ENCODE measurements at regions of chr16 and their contacts with region 1.

Region 1: DNA sequence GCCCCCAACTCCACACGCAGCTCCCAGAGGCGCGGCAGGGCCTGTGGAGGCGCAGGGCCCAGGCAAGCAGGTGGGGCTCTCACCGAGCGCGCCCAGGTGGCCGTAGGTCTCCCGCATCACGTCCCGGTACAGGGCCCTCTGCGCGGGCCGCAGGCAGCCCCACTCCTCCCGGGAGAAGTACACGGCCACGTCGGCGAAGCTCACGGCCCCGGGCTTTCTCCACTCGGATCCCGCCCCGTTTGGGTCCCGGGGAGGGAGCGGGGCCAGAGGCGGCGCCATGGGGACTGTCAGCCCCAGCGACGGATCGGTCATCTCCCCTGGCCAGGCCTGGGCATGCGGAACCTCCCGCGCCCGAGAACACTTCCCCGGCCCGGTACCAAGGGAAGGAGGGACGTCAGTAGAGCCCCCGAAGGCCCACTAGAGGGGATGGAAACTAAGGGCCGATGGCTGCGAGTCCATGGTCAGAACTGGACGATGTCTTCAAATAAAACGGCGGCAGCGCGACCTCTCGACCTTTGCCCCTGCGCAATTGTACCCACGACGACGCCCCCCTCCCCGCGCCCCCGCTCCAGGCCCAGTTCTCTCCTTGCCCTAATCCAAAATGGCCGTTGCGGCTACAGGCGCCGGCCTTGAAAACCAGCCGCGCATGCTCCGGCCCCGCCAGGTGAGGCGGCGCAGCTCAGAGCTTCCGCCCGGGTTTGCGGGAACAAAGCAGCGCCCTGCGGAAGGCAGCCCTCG is at the start of gene ZNF747:
- DNase-seq: peak; percentile 91
- ATAC-seq: peak; percentile 83
- H3K4me3 Mint-ChIP-seq: peak within 1 kb of the TSS; percentile 96
- H3K27ac Mint-ChIP-seq: peak within 1 kb of the TSS; percentile 99
- H3K4me1 Mint-ChIP-seq: peaks cover 23% of the 10 kb centered on the region
- H3K27me3 Mint-ChIP-seq: no peaks in the 10 kb centered on the region
- total RNA-seq, gene ZNF747: 11.9 to 12.5 TPM

Region 2: DNA sequence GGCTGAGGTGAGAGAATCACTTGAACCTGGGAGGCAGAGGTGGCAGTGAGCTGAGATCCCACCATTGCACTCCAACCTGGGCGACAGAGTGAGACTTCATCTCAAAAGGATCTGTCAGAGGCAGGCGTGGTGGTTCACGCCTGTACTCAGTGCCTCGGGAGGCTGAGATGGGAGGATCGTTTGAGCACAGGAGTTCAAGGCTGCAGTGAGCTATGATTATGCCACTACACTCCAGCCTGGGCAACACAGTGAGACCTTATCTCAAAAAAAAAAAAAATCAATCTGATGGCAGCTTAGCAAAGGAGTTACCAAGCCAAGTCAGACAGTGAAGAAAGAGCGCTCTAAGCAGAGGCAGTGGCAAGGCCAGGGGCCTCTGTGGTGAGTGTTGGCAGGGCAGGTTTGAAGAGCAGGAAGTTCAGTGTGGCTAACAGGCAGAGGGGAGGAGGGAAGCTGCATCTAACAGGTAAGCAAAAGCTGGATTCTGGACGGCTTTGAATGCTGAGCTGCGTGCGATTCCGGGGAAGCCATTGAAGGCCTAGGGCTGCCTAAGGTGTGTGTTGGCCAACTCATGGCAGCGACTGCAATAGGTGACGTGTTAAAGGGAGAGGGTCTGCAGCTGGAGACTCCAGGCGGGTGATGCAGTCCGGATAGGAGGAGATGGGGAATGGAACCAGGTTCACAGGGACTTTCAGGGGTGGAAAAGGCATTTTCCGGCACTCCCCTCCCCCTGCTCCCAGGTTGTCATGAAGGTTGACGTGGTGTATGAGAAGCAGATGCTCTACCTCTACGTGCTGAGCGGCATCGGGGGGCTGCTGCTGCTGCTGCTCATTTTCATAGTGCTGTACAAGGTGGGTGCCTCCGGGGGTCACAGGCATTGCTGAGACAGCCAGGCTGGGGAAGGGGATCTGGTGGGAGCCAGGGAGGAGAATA is 15.2 kb before region 1 on chr16:
- POLR2A ChIA-PET with region 1: interaction called, 18 read pairs
- DNase-seq: no peak
- ATAC-seq: peak; percentile 63
- H3K4me3 Mint-ChIP-seq: no peak overlapping the region
- H3K27ac Mint-ChIP-seq: peak overlapping the region; percentile 68
- H3K4me1 Mint-ChIP-seq: peaks cover 32% of the 10 kb centered on the region
- H3K27me3 Mint-ChIP-seq: no peaks in the 10 kb centered on the region

Region 3: GRCh38 chr16:30557957-30558788 is 23.6 kb after region 1 on chr16 and contains the start of gene ZNF764:
- POLR2A ChIA-PET with region 1: interaction called, 131 read pairs
- DNase-seq: peak; percentile 94
- ATAC-seq: peak; percentile 97
- H3K4me3 Mint-ChIP-seq: peak within 1 kb of the TSS; percentile 90
- H3K27ac Mint-ChIP-seq: peak within 1 kb of the TSS; percentile 91
- H3K4me1 Mint-ChIP-seq: peaks cover 34% of the 10 kb centered on the region
- H3K27me3 Mint-ChIP-seq: no peaks in the 10 kb centered on the region
- total RNA-seq, gene ZNF764: 20.9 to 23.3 TPM

Region 4: GRCh38 chr16:30585400-30586189 is 51.1 kb after region 1 on chr16 and contains the start of gene ZNF785:
- POLR2A ChIA-PET with region 1: interaction called, 21 read pairs
- DNase-seq: peak; percentile 88
- ATAC-seq: peak; percentile 98
- H3K4me3 Mint-ChIP-seq: peak within 1 kb of the TSS; percentile 96
- H3K27ac Mint-ChIP-seq: peak within 1 kb of the TSS; percentile 84
- H3K4me1 Mint-ChIP-seq: peaks cover 20% of the 10 kb centered on the region
- H3K27me3 Mint-ChIP-seq: no peaks in the 10 kb centered on the region
- total RNA-seq, gene ZNF785: 22.3 to 24.8 TPM

Region 5: GRCh38 chr16:30609926-30610839 is 75.6 kb after region 1 on chr16 and contains the start of gene ZNF689:
- POLR2A ChIA-PET with region 1: interaction called, 22 read pairs
- DNase-seq: peak; percentile 92
- ATAC-seq: peak; percentile 89
- H3K4me3 Mint-ChIP-seq: peak within 1 kb of the TSS; percentile 96
- H3K27ac Mint-ChIP-seq: peak within 1 kb of the TSS; percentile 94
- H3K4me1 Mint-ChIP-seq: peaks cover 24% of the 10 kb centered on the region
- H3K27me3 Mint-ChIP-seq: no peaks in the 10 kb centered on the region
- total RNA-seq, gene ZNF689: 12.7 to 14.4 TPM

Region 6: GRCh38 chr16:30715737-30716445 is 181.4 kb after region 1 on chr16:
- POLR2A ChIA-PET with region 1: no interaction called
- DNase-seq: no peak
- ATAC-seq: peak; percentile 100
- H3K4me3 Mint-ChIP-seq: peak overlapping the region; percentile 70
- H3K27ac Mint-ChIP-seq: peak overlapping the region; percentile 95
- H3K4me1 Mint-ChIP-seq: peaks cover 28% of the 10 kb centered on the region
- H3K27me3 Mint-ChIP-seq: no peaks in the 10 kb centered on the region